ENCODE measurements at regions of chr6 and their contacts with region 1.

Region 1: DNA sequence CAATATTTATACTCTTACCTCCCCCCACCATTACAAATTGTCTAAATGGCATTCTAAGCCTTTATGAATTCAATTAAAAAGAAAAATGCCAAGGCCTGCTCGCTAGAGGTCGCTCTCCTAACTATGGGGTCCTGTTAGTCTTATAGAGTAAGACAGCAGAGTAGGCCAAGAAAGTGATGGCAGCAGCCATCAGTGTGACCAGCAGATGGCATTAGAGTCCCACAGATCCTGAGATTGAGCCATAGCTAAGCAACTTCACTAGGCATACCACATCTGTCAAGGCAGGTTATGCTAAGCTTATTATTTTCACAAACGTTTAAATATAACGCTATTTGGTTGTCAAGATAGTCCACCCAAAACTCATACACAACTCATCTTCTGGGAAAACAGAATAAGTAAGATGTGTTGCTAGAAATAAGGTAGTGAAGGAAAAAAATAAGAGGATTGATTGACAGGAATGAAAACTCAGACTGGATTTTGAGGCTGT is 57.6 kb upstream of the SCAF8 start:
- DNase-seq: peak; percentile 90 to 91
- ATAC-seq: peak; percentile 99
- H3K4me3 ChIP-seq: no peak overlapping the region
- H3K27ac ChIP-seq: no peak overlapping the region
- H3K4me1 ChIP-seq: no peaks in the 10 kb centered on the region
- CTCF ChIP-seq: peak; percentile 99
- EP300 ChIP-seq: no peak
- POLR2A ChIP-seq: no peak
- RAD21 ChIP-seq: peak; percentile 93 to 96

Region 2: DNA sequence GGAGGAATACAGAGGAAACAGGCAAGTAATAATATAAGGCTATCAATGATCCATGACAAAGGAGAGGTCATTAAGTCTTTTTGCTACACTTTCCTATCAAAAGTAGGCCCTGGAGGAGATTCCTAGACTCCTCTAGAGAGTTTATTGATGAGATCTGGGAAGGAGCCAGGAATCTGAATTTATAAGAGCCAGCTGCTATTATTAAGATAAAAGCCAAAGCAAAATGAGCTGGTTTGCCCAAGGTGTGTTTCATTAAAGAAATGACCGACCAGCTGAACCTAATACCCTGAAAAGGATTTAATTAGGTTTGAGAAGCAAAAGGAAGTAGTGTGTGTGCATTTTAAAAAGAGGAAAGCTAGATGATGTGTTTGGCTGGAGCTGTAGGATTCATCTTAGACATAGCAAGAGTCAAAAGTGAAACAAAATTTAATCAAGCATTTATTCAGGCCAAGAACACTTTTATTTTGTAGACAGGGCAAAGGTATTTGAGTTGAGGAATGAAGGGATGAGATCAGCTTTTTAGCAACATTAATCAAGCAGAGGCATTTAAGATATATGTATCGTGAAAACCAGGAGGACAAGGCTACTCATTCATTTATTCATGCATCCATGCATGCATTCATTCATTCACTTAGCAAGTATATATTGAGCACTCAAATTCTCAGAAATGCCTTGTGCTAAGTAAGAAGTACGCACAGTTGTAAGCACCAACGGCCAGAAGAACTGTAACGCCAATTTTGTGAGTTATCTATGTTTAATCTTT is 14.0 kb after region 1 on chr6:
- CTCF ChIA-PET with region 1: interaction called, 20 read pairs
- POLR2A ChIA-PET with region 1: no interaction called
- DNase-seq: no peak
- ATAC-seq: no peak
- H3K4me3 ChIP-seq: no peak overlapping the region
- H3K27ac ChIP-seq: no peak overlapping the region
- H3K4me1 ChIP-seq: no peaks in the 10 kb centered on the region
- CTCF ChIP-seq: no peak
- EP300 ChIP-seq: no peak
- POLR2A ChIP-seq: no peak
- RAD21 ChIP-seq: no peak

Region 3: DNA sequence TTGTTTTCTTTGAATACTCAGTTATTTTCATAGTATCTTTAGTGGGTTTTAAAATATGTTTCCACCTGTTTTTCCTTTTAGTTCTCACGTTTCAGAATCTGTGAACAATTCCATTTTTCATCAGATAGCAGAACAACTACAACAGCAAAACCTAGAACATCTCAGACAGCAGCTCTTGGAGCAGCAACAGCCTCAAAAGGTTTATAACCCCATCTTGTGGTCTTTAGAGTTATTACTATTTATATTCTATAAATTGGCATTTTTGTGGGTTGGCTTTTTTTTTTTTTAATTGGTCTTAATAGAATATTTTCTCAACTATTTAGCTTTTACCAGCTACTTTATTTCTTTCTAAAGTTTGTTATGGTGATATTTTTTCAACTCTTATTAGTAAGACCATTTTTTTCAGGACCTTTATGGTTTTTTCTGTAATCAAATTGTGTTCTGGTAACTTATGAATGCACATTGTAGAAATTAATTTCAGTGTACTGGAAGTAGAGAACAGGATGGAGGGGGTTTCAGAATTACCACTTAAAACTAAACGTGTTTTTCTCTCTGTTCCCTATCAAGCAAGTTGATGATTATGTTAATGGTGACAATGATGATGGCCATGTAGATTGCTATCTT is 129.8 kb after region 1 on chr6:
- CTCF ChIA-PET with region 1: interaction called, 78 read pairs
- POLR2A ChIA-PET with region 1: no interaction called
- DNase-seq: peak; percentile 16 to 52
- ATAC-seq: peak in 1 of 2 experiments; percentile 52; a peak in 1 of 6 replicates
- H3K4me3 ChIP-seq: no peak overlapping the region
- H3K27ac ChIP-seq: no peak overlapping the region
- H3K4me1 ChIP-seq: no peaks in the 10 kb centered on the region
- CTCF ChIP-seq: peak; percentile 57
- EP300 ChIP-seq: no peak
- POLR2A ChIP-seq: no peak
- RAD21 ChIP-seq: peak; percentile 62 to 65

Measured in A549 (cell line).